WTC11 (cell line): ENCODE measurements at regions of chr3 and their contacts with region 1.

Region 1: DNA sequence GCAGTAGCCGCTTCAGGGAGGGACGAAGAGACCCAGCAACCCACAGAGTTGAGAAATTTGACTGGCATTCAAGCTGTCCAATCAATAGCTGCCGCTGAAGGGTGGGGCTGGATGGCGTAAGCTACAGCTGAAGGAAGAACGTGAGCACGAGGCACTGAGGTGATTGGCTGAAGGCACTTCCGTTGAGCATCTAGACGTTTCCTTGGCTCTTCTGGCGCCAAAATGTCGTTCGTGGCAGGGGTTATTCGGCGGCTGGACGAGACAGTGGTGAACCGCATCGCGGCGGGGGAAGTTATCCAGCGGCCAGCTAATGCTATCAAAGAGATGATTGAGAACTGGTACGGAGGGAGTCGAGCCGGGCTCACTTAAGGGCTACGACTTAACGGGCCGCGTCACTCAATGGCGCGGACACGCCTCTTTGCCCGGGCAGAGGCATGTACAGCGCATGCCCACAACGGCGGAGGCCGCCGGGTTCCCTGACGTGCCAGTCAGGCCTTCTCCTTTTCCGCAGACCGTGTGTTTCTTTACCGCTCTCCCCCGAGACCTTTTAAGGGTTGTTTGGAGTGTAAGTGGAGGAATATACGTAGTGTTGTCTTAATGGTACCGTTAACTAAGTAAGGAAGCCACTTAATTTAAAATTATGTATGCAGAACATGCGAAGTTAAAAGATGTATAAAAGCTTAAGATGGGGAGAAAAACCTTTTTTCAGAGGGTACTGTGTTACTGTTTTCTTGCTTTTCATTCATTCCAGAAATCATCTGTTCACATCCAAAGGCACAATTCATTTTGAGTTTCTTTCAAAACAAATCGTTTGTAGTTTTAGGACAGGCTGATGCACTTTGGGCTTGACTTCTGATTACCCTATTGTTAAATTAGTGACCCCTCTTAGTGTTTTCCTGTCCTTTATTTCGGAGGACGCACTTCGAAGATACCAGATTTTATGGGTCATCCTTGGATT is at the start of gene MLH1:
- DNase-seq: peak; percentile 99
- ATAC-seq: peak; percentile 92
- H3K4me3 Mint-ChIP-seq: no peak within 1 kb of the TSS
- H3K27ac Mint-ChIP-seq: no peak within 1 kb of the TSS
- H3K4me1 Mint-ChIP-seq: peaks cover 29% of the 10 kb centered on the region
- H3K27me3 Mint-ChIP-seq: no peaks in the 10 kb centered on the region
- CTCF ChIP-seq: no peak
- total RNA-seq, gene MLH1: 46.4 to 47.2 TPM (median 47.2 TPM) in 3 replicates

Region 2: DNA sequence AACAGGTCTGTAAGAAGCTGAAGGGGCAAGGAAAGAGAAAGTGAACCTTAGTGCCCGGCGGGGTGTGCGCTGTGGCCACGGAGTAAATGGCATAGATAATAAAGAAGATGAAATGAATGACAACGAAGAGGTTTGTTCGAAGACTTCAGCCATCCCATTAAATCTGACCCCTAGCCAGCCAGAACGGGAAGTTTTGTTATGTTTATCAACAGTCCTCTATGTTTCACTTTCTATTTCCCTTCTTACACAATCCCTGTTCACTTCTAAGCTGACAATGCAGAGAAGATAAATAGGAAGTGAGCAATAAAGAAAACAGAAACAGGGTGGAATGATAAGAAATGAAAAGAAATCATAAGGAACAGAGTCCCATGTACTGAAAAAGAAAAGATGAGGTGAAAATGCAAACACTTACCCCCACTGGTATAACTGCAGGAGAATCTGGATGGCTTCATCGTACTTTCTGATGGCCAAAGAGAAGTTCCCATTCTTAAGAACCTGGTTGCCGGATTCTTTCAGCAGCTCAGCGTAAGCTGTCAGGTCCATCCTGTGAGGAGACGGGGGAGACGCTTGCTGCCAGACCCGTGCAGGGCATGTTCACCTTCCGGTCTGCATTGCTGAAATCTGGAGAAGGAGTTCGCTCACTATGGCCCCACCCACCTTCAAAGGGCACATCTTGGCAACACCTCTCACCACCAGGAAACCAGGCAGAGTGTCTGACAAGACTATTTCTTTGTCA is 85.5 kb before region 1 on chr3:
- CTCF ChIA-PET with region 1: interaction called, 10 read pairs
- POLR2A ChIA-PET with region 1: interaction called, 4 read pairs
- DNase-seq: no peak
- ATAC-seq: no peak; the same call in 1 of the 2 replicates
- H3K4me3 Mint-ChIP-seq: no peak overlapping the region
- H3K27ac Mint-ChIP-seq: no peak overlapping the region
- H3K4me1 Mint-ChIP-seq: peaks cover 18% of the 10 kb centered on the region
- H3K27me3 Mint-ChIP-seq: no peaks in the 10 kb centered on the region
- CTCF ChIP-seq: no peak

Region 3: GRCh38 chr3:36944012-36944640 is 49.5 kb before region 1 on chr3:
- CTCF ChIA-PET with region 1: interaction called, 6 read pairs
- POLR2A ChIA-PET with region 1: interaction called, 11 read pairs
- DNase-seq: peak; percentile 66
- ATAC-seq: peak; percentile 54
- H3K4me3 Mint-ChIP-seq: peak overlapping the region; percentile 75
- H3K27ac Mint-ChIP-seq: no peak overlapping the region
- H3K4me1 Mint-ChIP-seq: peaks cover 25% of the 10 kb centered on the region
- H3K27me3 Mint-ChIP-seq: peaks cover 54% of the 10 kb centered on the region
- CTCF ChIP-seq: no peak

Region 4: GRCh38 chr3:36969540-36970432 is 23.8 kb before region 1 on chr3:
- CTCF ChIA-PET with region 1: interaction called, 7 read pairs
- POLR2A ChIA-PET with region 1: interaction called, 11 read pairs
- DNase-seq: no peak
- ATAC-seq: peak; percentile 75
- H3K4me3 Mint-ChIP-seq: no peak overlapping the region
- H3K27ac Mint-ChIP-seq: peak overlapping the region; percentile 61
- H3K4me1 Mint-ChIP-seq: peaks cover 30% of the 10 kb centered on the region
- H3K27me3 Mint-ChIP-seq: no peaks in the 10 kb centered on the region
- CTCF ChIP-seq: no peak

Region 5: DNA sequence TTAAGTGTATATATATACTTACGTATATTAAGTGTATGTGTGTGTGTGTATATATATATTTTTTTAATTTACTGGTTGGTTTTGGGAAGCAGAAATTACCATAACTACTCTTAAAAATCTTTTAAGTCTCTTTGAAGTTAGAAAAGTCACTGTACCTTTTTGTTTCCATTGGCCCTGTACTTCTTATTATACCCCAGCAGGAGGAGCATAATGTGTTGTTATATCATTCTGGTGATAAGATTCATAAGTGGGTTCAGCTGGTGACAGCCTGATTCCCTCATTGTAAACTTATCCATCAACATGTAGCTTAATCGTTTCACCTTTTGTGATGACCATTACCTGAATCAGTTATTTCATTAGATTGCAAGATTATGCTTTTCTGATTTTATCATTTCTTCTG is 30.5 kb after region 1 on chr3:
- CTCF ChIA-PET with region 1: no interaction called
- POLR2A ChIA-PET with region 1: no interaction called
- DNase-seq: no peak
- ATAC-seq: no peak
- H3K4me3 Mint-ChIP-seq: no peak overlapping the region
- H3K27ac Mint-ChIP-seq: no peak overlapping the region
- H3K4me1 Mint-ChIP-seq: no peaks in the 10 kb centered on the region
- H3K27me3 Mint-ChIP-seq: no peaks in the 10 kb centered on the region
- CTCF ChIP-seq: no peak